ENCODE measurements at regions of chr14 and their contacts with region 1.

Region 1: DNA sequence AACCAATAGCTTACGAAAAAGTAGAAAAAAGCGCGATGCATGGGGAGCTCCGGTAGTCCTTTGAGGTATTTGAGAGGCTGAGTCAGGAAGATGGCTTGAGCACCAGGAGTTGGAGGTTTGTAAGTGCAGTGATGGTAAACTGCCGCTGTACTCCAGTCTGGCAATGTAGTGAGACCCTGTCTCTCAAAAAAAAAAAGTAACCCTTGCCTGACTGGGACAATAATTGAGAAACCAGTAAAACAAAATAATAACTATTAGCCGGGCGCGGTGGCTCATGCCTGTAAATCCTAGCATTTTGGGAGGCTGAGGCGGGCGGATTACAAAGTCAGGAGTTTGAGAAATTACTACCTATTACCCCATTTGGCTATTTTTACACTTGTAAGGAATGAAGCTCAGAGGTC is 632 bp upstream of the ACOT2 start:
- DNase-seq: no peak
- ATAC-seq: no peak
- H3K4me3 Mint-ChIP-seq: peak overlapping the region; percentile 95
- H3K27ac Mint-ChIP-seq: peak overlapping the region; percentile 98
- H3K4me1 Mint-ChIP-seq: peaks cover 33% of the 10 kb centered on the region
- H3K27me3 Mint-ChIP-seq: no peaks in the 10 kb centered on the region

Region 2: DNA sequence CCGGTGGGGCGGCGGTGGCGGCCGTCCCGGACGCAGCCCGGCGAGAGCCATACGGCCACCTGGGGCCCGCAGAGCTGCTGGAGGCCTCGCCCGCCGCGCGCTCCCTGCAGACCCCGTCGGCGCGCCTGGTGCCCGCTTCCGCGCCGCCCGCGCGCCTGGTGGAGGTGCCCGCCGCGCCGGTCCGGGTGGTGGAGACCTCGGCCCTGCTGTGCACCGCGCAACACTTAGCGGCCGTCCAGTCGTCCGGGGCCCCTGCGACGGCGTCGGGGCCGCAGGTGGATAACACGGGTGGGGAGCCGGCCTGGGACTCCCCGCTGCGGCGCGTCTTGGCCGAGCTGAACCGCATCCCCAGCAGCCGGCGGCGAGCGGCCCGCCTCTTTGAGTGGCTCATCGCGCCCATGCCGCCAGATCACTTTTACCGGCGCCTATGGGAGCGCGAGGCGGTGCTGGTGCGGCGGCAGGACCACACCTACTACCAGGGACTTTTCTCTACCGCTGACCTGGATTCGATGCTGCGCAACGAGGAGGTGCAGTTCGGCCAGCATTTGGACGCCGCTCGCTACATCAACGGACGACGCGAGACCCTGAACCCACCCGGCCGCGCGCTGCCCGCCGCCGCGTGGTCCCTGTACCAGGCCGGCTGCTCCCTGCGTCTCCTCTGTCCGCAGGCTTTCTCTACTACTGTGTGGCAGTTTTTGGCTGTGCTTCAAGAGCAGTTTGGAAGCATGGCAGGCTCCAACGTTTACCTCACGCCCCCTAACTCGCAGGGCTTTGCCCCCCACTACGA is 76.9 kb before region 1 on chr14:
- POLR2A ChIA-PET with region 1: interaction called, 23 read pairs
- DNase-seq: peak; percentile 79
- ATAC-seq: peak; percentile 63
- H3K4me3 Mint-ChIP-seq: peak overlapping the region; percentile 86
- H3K27ac Mint-ChIP-seq: peak overlapping the region; percentile 71
- H3K4me1 Mint-ChIP-seq: peaks cover 26% of the 10 kb centered on the region
- H3K27me3 Mint-ChIP-seq: peaks cover 9% of the 10 kb centered on the region

Region 3: DNA sequence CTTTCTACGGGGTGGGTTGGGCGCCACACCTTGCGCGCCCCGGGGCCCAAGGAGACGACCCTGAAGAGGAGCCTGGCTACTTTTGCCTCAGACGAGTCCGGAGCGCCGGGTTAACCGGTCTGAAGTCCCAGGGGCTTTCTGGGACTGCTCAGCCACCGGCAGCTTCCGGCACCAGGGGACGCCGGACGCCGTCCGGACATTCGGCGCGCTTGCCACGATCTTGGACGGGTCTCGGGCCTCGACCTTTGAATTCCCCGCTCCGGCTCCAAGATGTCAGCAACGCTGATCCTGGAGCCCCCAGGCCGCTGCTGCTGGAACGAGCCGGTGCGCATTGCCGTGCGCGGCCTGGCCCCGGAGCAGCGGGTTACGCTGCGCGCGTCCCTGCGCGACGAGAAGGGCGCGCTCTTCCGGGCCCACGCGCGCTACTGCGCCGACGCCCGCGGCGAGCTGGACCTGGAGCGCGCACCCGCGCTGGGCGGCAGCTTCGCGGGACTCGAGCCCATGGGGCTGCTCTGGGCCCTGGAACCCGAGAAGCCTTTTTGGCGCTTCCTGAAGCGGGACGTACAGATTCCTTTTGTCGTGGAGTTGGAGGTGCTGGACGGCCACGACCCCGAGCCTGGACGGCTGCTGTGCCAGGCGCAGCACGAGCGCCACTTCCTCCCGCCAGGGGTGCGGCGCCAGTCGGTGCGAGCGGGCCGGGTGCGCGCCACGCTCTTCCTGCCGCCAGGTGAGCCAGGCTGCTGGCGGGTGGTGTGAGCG is 23.5 kb after region 1 on chr14 and contains the start of gene ACOT4:
- POLR2A ChIA-PET with region 1: interaction called, 10 read pairs
- DNase-seq: peak; percentile 74
- ATAC-seq: peak; percentile 82
- H3K4me3 Mint-ChIP-seq: peak within 1 kb of the TSS; percentile 74
- H3K27ac Mint-ChIP-seq: peak within 1 kb of the TSS; percentile 54
- H3K4me1 Mint-ChIP-seq: peaks cover 16% of the 10 kb centered on the region
- H3K27me3 Mint-ChIP-seq: no peaks in the 10 kb centered on the region
- total RNA-seq, gene ACOT4: 1.9 TPM

Region 4: GRCh38 chr14:73613046-73613383 is 44.6 kb after region 1 on chr14:
- POLR2A ChIA-PET with region 1: interaction called, 18 read pairs
- DNase-seq: no peak
- ATAC-seq: peak; percentile 3
- H3K4me3 Mint-ChIP-seq: peak overlapping the region; percentile 86
- H3K27ac Mint-ChIP-seq: peak overlapping the region; percentile 70
- H3K4me1 Mint-ChIP-seq: peaks cover 10% of the 10 kb centered on the region
- H3K27me3 Mint-ChIP-seq: peaks cover 2% of the 10 kb centered on the region

Measured in activated naive CD8-positive, alpha-beta T cell treated with anti-CD3 and anti-CD28 coated beads, Interleukin-2, amount 10 ng/mL, durations not matched to agents 7 days and 5 days (primary cell).